ENCODE measurements at regions of chr1 and their contacts with region 1.

Region 1: DNA sequence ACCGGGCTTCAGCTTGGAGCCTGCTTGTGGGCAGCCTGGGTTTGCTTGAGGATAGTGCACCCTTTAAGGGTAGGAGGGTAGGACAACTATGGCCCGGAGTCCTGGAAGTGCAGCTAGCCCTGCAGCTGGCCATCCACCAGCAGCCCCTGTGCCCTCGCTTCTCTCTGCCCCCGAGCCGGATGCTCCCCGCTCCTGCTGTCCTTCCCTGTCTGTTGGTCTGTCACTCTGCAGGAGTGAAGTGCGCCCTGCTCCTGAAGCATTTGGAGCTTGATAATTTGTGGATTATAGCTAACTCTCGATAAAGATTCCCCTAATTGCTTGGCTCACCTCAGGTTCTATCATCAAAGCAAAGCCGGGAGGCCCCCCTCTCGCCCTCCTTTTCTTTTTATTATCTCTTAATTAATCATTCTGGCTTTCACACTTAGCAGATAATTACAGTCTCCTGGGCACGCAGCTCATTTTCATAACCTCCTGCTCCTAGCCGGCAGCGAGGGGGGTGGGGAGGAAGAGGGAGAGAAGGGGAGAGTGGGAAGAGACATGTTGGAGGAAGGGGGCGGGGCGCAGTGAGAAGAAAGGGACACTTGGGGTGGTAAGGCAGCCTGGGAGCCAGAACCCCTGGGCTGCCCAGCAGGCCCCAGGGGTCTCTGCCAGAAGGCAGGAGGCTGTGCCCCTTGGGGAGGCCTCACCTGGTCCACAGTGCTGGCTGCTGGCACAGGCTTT is 14.4 kb downstream of the KIRREL1 start:
- DNase-seq: no peak
- ATAC-seq: peak; percentile 8
- H3K4me3 Mint-ChIP-seq: no peak overlapping the region
- H3K27ac Mint-ChIP-seq: no peak overlapping the region
- H3K4me1 Mint-ChIP-seq: peaks cover 91% of the 10 kb centered on the region
- H3K27me3 Mint-ChIP-seq: no peaks in the 10 kb centered on the region
- CTCF ChIP-seq: no peak

Region 2: GRCh38 chr1:158019171-158019868 is 11.5 kb after region 1 on chr1:
- CTCF ChIA-PET with region 1: interaction called, 20 read pairs
- POLR2A ChIA-PET with region 1: interaction called, 6 read pairs
- DNase-seq: peak; percentile 64
- ATAC-seq: peak; percentile 87
- H3K4me3 Mint-ChIP-seq: peak overlapping the region; percentile 37
- H3K27ac Mint-ChIP-seq: peak overlapping the region; percentile 91
- H3K4me1 Mint-ChIP-seq: peaks cover 95% of the 10 kb centered on the region
- H3K27me3 Mint-ChIP-seq: no peaks in the 10 kb centered on the region
- CTCF ChIP-seq: no peak

Region 3: GRCh38 chr1:158283965-158284364 is 276.1 kb after region 1 on chr1:
- CTCF ChIA-PET with region 1: no interaction called
- POLR2A ChIA-PET with region 1: no interaction called
- DNase-seq: no peak
- ATAC-seq: no peak
- H3K4me3 Mint-ChIP-seq: no peak overlapping the region
- H3K27ac Mint-ChIP-seq: peak overlapping the region; percentile 10; the same call in 1 of the 2 replicates
- H3K4me1 Mint-ChIP-seq: peaks cover 13% of the 10 kb centered on the region
- H3K27me3 Mint-ChIP-seq: no peaks in the 10 kb centered on the region
- CTCF ChIP-seq: no peak

Measured in WTC11 (cell line).